ENCODE measurements at regions of chr2 and their contacts with region 1.

Region 1: GRCh38 chr2:46461011-46461674 is 18.2 kb upstream of the TMEM247 start:
- DNase-seq: peak; percentile 86
- H3K4me3 ChIP-seq: no peak overlapping the region
- H3K27ac ChIP-seq: peak overlapping the region; percentile 22 to 68 (median 58)
- H3K4me1 ChIP-seq: peaks cover 0 to 25% (median 16%) of the 10 kb centered on the region in 4 donors
- H3K27me3 ChIP-seq: no peaks in the 10 kb centered on the region
- CTCF ChIP-seq: peak; percentile 98 to 100 (median 99)
- EP300 ChIP-seq: no peak
- POLR2A ChIP-seq: no peak

Region 2: DNA sequence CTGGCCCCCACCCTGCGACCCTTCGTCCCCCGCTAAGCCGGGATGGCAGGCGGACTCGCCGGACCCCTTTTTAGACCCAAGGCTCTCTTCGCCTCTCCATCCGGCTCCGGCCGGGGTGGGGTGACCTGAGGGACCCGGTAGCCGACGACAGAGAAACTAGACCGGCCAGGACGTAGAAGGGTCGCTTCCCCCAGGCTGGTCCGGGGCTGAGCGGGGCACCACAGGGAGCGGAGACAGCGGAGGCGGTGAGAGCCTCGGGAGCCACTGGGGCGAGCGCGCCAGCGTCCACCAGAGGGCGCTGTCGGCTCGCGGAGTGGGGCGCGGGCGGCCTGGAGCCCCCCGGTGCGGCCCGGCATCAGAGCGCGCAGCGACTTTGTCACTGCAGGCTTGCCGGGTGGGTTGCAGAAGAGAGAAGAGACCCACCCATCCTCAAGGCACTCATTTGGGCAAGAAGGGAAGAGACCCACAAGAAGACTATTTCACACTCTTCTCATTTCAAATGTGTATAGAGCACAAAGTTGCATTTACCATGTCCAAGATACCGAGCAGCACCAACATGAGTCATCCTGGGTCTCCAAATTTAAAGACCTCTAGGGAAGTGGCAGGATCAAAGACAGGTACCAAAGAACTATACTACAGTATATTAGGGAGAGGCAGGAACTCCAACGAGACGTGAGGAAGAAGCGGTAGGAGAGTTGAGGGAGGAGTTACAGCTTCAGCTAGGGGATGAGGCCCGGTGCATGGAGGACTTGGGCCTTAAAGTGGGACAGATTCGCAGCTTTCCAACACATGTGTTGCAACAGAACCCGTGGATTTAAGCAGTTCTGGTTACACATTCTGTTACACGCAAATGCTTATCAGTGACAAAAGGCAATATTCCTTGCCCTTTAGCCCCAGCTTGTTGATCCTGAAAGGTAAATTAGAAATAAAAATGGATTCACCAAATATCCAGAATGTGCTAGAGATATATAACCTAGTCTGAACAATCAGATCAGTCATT is 817.3 kb before region 1 on chr2:
- intact Hi-C with region 1: loop called (anchors 2 kb)
- DNase-seq: peak; percentile 78
- H3K4me3 ChIP-seq: peak overlapping the region; percentile 32 to 69 (median 58)
- H3K27ac ChIP-seq: peak overlapping the region in 3 of 4 donors; percentile 35 to 67 (median 36)
- H3K4me1 ChIP-seq: peaks cover 0 to 37% (median 22%) of the 10 kb centered on the region in 4 donors
- H3K27me3 ChIP-seq: peaks cover 0 to 4% (median 0%) of the 10 kb centered on the region in 3 donors
- CTCF ChIP-seq: peak; percentile 91 to 99 (median 97)
- EP300 ChIP-seq: no peak
- POLR2A ChIP-seq: no peak

Region 3: DNA sequence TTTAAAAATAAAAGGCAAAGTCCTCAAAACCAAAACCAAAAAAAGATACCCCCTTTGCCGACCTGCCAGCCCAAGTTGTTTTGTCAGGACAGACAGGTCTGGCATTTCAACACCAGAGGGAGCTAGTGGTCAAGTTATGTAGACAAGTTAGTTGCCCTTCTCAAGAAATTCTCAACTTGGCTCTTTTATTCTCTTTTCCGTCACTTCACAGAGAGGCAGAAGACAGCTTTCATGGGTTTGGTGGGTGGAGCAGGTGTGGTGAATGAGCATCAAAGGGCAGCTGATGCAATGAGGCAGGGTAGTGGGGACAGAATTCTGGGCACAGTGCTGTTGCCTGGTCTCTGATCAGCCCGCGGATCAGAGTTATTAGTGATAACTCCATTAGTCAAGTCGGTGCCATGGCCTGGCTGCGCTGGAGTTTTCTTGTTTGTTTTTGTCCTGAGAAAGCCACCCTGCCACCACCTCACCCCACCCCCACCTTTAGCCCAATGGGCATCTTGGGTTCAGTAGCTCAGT is 467.6 kb before region 1 on chr2:
- intact Hi-C with region 1: loop called (anchors 2 kb)
- DNase-seq: peak; percentile 76
- H3K4me3 ChIP-seq: no peak overlapping the region
- H3K27ac ChIP-seq: peak overlapping the region in 2 of 4 donors; percentile 69 to 72
- H3K4me1 ChIP-seq: peaks cover 0 to 44% (median 35%) of the 10 kb centered on the region in 4 donors
- H3K27me3 ChIP-seq: no peaks in the 10 kb centered on the region
- CTCF ChIP-seq: peak; percentile 63 to 84 (median 74)
- EP300 ChIP-seq: no peak
- POLR2A ChIP-seq: no peak

Region 4: GRCh38 chr2:46010925-46011490 is 450.1 kb before region 1 on chr2:
- intact Hi-C with region 1: loop called (anchors 2 kb)
- DNase-seq: no peak
- H3K4me3 ChIP-seq: no peak overlapping the region
- H3K27ac ChIP-seq: no peak overlapping the region
- H3K4me1 ChIP-seq: no peaks in the 10 kb centered on the region
- H3K27me3 ChIP-seq: no peaks in the 10 kb centered on the region
- CTCF ChIP-seq: peak in 3 of 4 experiments; percentile 53 to 57 (median 53)
- EP300 ChIP-seq: no peak
- POLR2A ChIP-seq: no peak

Region 5: DNA sequence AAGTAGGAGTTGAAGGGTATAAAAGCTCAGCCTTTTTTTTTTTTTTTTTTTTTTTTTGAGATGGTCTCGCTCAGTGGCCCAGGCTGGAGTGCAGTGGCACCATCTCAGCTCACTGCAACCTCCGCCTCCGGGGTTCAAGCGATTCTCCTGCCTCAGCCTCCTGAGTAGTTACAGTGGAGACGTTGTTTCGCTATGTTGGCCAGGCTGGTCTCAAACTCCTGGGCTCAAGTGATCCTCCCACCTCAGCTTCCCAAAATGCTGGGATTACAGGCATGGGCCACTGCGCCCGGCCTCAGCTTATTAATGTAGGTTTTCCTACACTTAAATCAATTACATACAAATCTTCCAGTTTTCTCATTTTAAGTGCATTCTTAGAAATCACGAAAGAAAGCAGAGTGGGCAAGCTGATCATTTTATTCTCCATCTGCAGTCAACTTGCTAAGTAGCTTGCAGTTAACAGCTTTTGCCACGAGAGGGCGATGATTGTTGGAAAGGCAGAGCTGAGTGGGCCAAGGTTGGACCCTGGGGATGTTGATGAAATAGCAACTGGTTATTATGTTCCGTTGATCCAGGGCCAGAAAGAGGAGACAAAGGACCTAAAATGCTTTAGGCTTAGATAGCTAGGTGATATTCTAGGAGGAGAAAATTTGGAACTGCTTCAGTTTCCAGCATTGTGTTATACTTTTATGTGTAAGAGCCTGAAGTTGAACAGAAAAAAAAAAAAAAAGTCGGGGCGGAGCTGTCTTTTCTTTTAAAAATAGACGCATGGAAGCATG is 398.3 kb before region 1 on chr2:
- intact Hi-C with region 1: loop called (anchors 2 kb)
- DNase-seq: peak; percentile 92
- H3K4me3 ChIP-seq: no peak overlapping the region
- H3K27ac ChIP-seq: peak overlapping the region in 2 of 4 donors; percentile 30 to 47
- H3K4me1 ChIP-seq: peaks cover 0 to 6% (median 3%) of the 10 kb centered on the region in 4 donors
- H3K27me3 ChIP-seq: no peaks in the 10 kb centered on the region
- CTCF ChIP-seq: peak; percentile 74 to 93 (median 84)
- EP300 ChIP-seq: no peak
- POLR2A ChIP-seq: no peak